Heart left ventricle (tissue), 16 donors: ENCODE measurements at regions of chr6 and their contacts with region 1.

Region 1: DNA sequence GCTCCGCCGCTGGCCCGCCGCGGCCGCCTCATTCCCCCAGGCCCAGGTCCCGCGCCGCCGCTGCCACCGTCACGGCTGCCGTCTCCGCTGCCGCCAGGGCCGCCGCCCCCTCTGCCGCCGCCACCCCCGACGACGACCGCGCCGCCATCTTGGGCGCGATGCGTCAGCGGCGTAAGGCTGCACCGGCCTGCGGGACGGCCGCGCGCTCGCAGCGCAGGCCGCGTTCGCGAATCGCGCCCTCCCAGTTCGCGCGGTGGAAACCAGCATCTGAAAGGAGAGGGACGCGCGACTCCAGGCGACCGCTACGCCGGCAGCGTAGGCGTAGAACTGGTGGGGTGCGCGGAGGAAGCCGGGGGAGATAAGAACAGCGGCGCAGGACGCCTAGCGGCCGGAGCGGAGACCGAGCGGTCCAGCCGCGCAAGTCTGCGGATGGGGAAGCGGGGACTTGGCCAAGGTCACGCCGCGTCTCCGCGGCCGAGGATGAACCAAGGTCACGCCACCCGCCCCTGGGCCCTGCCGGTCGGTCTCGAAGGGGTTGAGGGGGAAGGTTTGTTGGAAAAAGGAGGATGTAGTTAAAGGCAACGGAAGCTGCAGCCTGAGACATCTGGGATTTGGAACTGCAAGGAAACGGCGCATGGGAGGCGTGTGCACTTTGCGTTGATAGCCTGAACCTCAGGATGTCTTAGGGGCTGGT is at the start of gene NUDT3:
- DNase-seq: peak; percentile 95 to 98 (median 96)
- ATAC-seq: peak; percentile 85 to 95 (median 92)
- H3K4me3 ChIP-seq: peak within 1 kb of the TSS; percentile 59 to 98 (median 91)
- H3K27ac ChIP-seq: peak within 1 kb of the TSS; percentile 88 to 99 (median 97)
- H3K4me1 ChIP-seq: peaks cover 0 to 48% (median 35%) of the 10 kb centered on the region in 12 donors
- H3K27me3 ChIP-seq: no peaks in the 10 kb centered on the region
- CTCF ChIP-seq: peak; percentile 70 to 95 (median 84)
- POLR2A ChIP-seq: peak in 1 of 2 donors; percentile 66
- total RNA-seq, gene NUDT3: 29.6 to 68.4 (median 54.9) TPM

Region 2: GRCh38 chr6:34273242-34273805 is 119.3 kb before region 1 on chr6:
- intact Hi-C with region 1: loop called in 2 of 10 experiments (anchors 2 to 10 kb)
- DNase-seq: peak; percentile 72 to 82 (median 78)
- ATAC-seq: peak; percentile 64 to 93 (median 84)
- H3K4me3 ChIP-seq: no peak overlapping the region
- H3K27ac ChIP-seq: peak overlapping the region in 11 of 12 donors; percentile 41 to 73 (median 59)
- H3K4me1 ChIP-seq: peaks cover 0 to 52% (median 26%) of the 10 kb centered on the region in 12 donors
- H3K27me3 ChIP-seq: no peaks in the 10 kb centered on the region
- CTCF ChIP-seq: no peak
- POLR2A ChIP-seq: no peak

Region 3: DNA sequence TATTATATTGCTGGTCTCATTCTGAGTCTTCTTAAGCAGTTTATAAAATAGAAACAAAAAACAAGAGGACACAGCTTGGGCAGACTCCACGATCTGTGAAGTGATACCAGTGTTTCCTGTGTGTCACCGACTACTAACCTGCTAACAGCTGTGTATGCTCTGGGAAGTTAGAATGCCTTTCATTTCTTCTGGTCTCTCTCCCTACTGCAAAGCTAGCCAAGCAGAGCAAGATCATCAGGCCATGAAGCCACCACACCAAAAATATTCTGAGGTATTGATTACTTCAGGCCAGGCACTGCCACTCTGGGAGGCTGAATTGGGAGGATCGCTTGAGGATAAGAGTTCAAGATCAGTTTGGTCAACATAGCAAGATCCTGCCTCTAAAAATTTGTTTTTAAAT is 96.9 kb before region 1 on chr6:
- intact Hi-C with region 1: loop called in 3 of 10 experiments (anchors 5 kb)
- DNase-seq: no peak
- ATAC-seq: no peak
- H3K4me3 ChIP-seq: no peak overlapping the region
- H3K27ac ChIP-seq: peak overlapping the region in 5 of 12 donors; percentile 12 to 39 (median 27)
- H3K4me1 ChIP-seq: peaks cover 0 to 61% (median 28%) of the 10 kb centered on the region in 12 donors
- H3K27me3 ChIP-seq: no peaks in the 10 kb centered on the region
- CTCF ChIP-seq: no peak
- POLR2A ChIP-seq: no peak

Region 4: DNA sequence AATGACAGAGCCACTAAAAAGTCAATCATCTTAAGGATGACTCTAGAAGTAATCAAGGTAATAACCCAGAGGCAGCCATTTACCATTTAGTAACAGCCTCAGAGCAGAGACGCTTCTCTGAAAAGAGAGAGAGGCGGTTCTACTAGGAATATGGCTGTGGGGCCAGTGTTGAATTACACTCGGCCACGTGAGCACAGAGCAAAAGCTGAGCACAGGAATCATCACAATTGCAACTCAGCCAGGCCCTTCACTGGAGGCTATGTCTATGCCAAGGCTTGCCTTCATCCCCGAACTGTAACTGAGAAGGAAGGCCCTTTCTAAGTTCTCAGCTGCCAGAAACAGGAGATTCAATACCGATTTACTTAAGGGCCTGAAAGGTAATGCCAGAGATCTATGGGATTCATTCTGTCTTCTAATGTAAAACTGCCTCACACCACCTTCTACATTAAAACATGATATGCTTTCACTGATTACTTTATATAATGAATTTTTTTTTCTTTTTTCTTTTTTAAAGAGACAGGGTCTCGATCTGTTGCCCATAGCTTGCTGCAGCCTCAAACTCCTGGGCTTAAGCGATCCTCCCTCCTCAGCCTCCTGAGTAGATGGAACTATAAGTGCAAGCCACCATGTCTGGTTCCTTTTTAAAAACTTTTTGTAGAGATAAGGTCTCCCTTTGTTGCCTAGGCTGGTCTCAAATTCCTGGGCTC is 67.8 kb before region 1 on chr6:
- intact Hi-C with region 1: loop called in 3 of 10 experiments (anchors 5 to 10 kb)
- DNase-seq: peak in 4 of 5 donors; percentile 40 to 81 (median 61)
- ATAC-seq: peak; percentile 78 to 96 (median 93)
- H3K4me3 ChIP-seq: no peak overlapping the region
- H3K27ac ChIP-seq: peak overlapping the region in 11 of 12 donors; percentile 7 to 76 (median 45)
- H3K4me1 ChIP-seq: peaks cover 0 to 32% (median 13%) of the 10 kb centered on the region in 12 donors
- H3K27me3 ChIP-seq: no peaks in the 10 kb centered on the region
- CTCF ChIP-seq: no peak
- POLR2A ChIP-seq: no peak

Region 5: DNA sequence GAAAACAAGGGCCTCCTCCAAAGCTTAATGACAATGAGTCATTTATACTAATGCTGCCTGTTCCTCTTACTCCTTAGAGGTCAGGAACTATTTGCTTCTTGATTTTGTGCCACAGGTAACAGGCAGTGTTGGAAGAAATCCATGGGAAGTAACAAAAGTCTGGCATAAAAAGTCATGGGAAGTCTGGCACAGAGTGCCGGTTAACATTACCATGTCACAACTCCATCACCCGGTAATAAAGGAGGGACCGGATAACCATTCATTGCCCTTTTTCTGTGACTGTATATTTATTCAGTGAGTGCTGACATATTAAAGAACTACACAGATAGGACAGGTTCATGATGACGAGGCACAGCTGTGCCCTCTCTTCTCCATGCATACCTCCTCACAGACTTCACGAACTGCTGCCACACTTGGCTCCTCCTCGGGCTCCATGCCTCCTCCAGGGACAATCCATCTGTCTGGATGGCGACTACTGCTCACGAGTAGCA is 51.1 kb before region 1 on chr6:
- intact Hi-C with region 1: loop called in 2 of 10 experiments (anchors 5 to 10 kb)
- DNase-seq: peak in 1 of 5 donors; percentile 41
- ATAC-seq: peak; percentile 56 to 71 (median 68)
- H3K4me3 ChIP-seq: no peak overlapping the region
- H3K27ac ChIP-seq: peak overlapping the region in 11 of 12 donors; percentile 4 to 71 (median 48)
- H3K4me1 ChIP-seq: peaks cover 3 to 97% (median 62%) of the 10 kb centered on the region in 12 donors
- H3K27me3 ChIP-seq: no peaks in the 10 kb centered on the region
- CTCF ChIP-seq: no peak
- POLR2A ChIP-seq: no peak

Region 6: GRCh38 chr6:34425498-34426410 is 33.1 kb after region 1 on chr6 and contains the start of gene RPS10:
- intact Hi-C with region 1: loop called in 1 of 10 experiments (anchors 1 kb)
- DNase-seq: peak; percentile 93 to 97 (median 95)
- ATAC-seq: peak; percentile 98 to 99 (median 99)
- H3K4me3 ChIP-seq: peak within 1 kb of the TSS; percentile 61 to 93 (median 86)
- H3K27ac ChIP-seq: peak within 1 kb of the TSS; percentile 25 to 88 (median 85)
- H3K4me1 ChIP-seq: peaks cover 0 to 30% (median 11%) of the 10 kb centered on the region in 12 donors
- H3K27me3 ChIP-seq: no peaks in the 10 kb centered on the region
- CTCF ChIP-seq: peak in 2 of 12 donors; percentile 13 to 17
- POLR2A ChIP-seq: peak; percentile 70 to 89
- total RNA-seq, gene RPS10: 504 to 1,180 (median 746) TPM